Activated CD4-positive, alpha-beta memory T cell treated with anti-CD3 and anti-CD28 coated beads for 36 hours (primary cell): ENCODE measurements at regions of chr12 and their contacts with region 1.

Region 1: DNA sequence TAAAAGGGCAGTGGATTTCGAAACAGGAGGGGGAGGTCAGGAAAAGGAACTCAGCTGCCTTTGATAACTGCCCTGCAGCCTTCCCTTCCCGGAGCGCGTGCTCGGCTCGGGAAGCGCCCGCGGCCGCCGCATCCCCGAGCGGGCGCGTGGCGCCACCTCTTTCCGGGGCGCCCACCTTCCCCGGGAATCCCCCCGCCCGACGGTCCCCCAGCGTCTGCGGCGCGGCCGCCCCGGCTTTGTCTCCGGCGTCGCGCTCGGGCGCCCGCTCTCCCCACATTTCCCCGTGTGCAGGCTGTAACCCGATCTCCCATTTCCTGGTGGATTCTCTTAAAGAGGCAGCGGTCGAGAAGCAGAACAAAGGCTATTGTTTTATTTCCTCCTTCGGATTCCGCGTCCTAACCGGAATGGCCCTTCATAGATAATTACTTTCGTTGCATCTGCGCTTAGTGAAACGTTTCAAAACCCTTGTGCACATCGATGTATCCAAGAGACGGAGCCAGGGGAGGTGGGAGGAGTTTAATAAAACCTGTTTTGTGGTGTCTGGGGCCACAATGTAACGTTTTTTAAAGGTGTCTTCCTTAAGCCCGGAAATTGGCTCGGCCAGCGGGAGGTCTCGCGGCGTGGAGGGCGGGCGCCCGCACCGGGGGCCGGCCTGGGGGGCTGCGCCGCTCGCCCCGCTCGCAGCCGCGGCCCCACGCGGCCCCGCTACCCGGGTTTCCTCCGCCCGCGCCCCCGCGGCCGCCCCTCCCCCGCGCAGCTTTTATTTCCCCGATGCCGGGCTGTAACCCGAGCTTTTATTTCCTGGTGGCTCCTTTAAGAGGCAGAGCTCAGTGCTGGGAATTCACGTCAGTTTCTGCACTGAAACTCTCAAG is at the start of gene ETV6:
- DNase-seq: peak; percentile 85
- H3K4me3 Mint-ChIP-seq: peak within 1 kb of the TSS; percentile 87
- H3K27ac Mint-ChIP-seq: peak within 1 kb of the TSS; percentile 98
- H3K4me1 Mint-ChIP-seq: peaks cover 28% of the 10 kb centered on the region
- H3K27me3 Mint-ChIP-seq: no peaks in the 10 kb centered on the region
- total RNA-seq, gene ETV6: 55.3 to 57.5 TPM

Region 2: GRCh38 chr12:11711651-11712327 is 62.7 kb after region 1 on chr12:
- CTCF ChIA-PET with region 1: no interaction called
- POLR2A ChIA-PET with region 1: no interaction called
- intact Hi-C with region 1: no loop called
- DNase-seq: no peak
- H3K4me3 Mint-ChIP-seq: no peak overlapping the region
- H3K27ac Mint-ChIP-seq: peak overlapping the region; percentile 47
- H3K4me1 Mint-ChIP-seq: peaks cover 77% of the 10 kb centered on the region
- H3K27me3 Mint-ChIP-seq: no peaks in the 10 kb centered on the region

Region 3: GRCh38 chr12:11724888-11725311 is 75.8 kb after region 1 on chr12:
- CTCF ChIA-PET with region 1: no interaction called
- POLR2A ChIA-PET with region 1: interaction called, 10 read pairs
- intact Hi-C with region 1: no loop called
- DNase-seq: no peak
- H3K4me3 Mint-ChIP-seq: no peak overlapping the region
- H3K27ac Mint-ChIP-seq: no peak overlapping the region
- H3K4me1 Mint-ChIP-seq: peaks cover 78% of the 10 kb centered on the region
- H3K27me3 Mint-ChIP-seq: no peaks in the 10 kb centered on the region

Region 4: DNA sequence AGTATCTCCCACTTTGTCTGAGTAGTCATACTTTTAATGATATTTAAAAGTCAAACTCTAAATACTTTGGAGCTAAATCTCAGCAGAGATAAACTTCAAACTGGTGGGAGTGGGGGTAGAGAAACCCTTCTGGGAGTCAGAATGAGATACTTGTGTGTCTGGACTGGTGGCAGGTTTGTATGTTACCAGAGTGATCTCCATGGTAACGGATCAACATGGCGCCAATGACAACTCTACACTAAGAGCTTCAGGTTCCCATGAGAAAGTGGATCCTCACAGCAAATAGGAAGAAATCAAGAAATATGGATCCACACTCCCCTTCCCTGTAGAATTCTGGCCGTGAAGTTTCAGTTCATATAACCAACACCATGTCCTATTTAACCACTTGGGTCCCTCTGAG is 122.3 kb after region 1 on chr12:
- CTCF ChIA-PET with region 1: interaction called, 3 read pairs
- POLR2A ChIA-PET with region 1: interaction called, 29 read pairs
- intact Hi-C with region 1: loop called (anchors 1 kb)
- DNase-seq: peak; percentile 49
- H3K4me3 Mint-ChIP-seq: no peak overlapping the region
- H3K27ac Mint-ChIP-seq: peak overlapping the region; percentile 88
- H3K4me1 Mint-ChIP-seq: peaks cover 93% of the 10 kb centered on the region
- H3K27me3 Mint-ChIP-seq: no peaks in the 10 kb centered on the region

Region 5: DNA sequence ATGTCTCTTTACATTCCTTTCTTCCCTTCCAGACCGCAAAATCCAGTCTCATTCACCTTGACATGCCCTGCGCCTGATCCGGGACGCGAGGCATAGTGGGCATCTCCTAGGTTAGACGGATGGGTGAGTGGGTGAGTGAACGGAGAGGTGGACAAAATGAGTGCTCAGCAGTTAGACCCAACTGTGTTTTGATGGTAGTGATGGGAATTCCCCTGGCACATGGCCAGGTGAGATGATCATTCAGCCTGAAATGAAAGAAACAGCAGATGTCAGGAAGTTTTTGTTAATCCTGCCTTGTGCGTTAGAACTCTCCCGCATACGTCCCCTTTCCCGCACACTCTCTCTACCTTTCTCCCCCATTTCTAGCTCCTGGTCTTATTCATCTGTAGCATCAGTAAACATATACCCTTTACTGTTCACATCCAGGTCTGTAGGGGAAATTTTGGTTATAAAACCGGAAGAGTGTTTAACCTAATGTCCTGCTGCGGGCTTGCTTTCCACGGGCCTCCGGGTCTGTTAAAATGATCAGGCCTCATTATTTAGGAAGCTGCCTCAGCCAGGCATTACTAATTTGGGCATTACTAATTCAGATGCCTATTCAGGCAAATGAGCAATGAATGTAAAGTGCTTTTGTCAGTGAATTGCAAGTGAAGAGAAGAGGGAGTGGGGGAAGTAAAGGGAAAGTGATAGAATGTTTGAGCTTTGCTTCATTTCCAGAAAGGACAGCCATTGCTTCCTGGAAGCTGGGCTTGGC is 173.2 kb after region 1 on chr12:
- CTCF ChIA-PET with region 1: no interaction called
- POLR2A ChIA-PET with region 1: interaction called, 7 read pairs
- intact Hi-C with region 1: loop called (anchors 5 kb)
- DNase-seq: peak; percentile 83
- H3K4me3 Mint-ChIP-seq: peak overlapping the region; percentile 49
- H3K27ac Mint-ChIP-seq: peak overlapping the region; percentile 87
- H3K4me1 Mint-ChIP-seq: peaks cover 66% of the 10 kb centered on the region
- H3K27me3 Mint-ChIP-seq: no peaks in the 10 kb centered on the region

Region 6: GRCh38 chr12:11901701-11902524 is 252.8 kb after region 1 on chr12:
- CTCF ChIA-PET with region 1: no interaction called
- POLR2A ChIA-PET with region 1: interaction called, 5 read pairs
- intact Hi-C with region 1: loop called (anchors 5 kb)
- DNase-seq: peak; percentile 81
- H3K4me3 Mint-ChIP-seq: peak overlapping the region; percentile 50
- H3K27ac Mint-ChIP-seq: peak overlapping the region; percentile 92
- H3K4me1 Mint-ChIP-seq: peaks cover 52% of the 10 kb centered on the region
- H3K27me3 Mint-ChIP-seq: no peaks in the 10 kb centered on the region

Region 7: DNA sequence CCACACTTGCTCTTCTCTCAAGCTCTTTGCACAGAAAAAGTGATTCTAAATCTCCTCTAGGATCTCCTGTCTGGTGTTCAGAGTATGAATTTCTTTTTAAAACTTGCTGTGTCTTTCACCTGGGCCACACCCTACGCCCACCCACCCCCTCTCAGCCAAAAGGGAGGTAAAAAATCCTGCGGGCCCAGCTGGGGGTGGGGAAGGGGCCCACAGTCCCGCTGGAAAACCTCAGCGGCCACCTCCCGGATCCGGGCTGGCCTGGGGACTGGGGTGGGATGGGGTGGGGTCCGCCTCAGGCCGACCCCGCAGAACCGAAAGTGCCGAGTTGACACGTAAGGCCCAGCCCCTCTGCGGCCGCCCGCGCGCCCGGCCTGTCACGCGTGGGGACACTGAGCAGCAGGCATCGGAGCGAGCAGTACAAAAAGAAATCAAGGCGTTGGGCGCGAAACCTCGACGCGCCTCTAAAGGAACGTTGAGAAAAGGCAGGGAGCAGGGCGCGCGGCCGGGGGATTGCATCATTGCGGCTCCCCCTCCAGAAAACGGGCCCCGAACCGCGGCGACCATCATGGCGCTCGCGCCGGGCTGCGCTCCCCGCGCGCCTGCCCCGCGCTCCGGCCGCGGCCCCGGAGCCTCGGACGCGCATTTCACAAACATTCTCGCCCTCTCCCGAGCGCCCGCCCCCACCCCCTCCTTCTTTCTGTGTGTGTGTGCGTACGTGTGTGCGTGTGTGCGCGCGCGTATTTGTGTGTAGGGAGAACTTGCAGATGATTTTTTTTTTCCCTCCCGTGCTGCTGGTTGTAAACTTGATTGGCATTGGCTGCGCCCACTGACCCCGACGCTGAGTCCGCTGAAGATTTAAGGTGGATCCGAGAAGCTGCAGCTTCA is 1075.8 kb after region 1 on chr12:
- CTCF ChIA-PET with region 1: no interaction called
- POLR2A ChIA-PET with region 1: interaction called, 3 read pairs
- intact Hi-C with region 1: loop called (anchors 5 kb)
- DNase-seq: peak; percentile 95
- H3K4me3 Mint-ChIP-seq: peak overlapping the region; percentile 95
- H3K27ac Mint-ChIP-seq: peak overlapping the region; percentile 97
- H3K4me1 Mint-ChIP-seq: peaks cover 50% of the 10 kb centered on the region
- H3K27me3 Mint-ChIP-seq: peaks cover 2% of the 10 kb centered on the region